Panc1 (cell line): ENCODE measurements at regions of chr1 and their contacts with region 1.

Region 1: GRCh38 chr1:23004112-23004511 is 11.5 kb downstream of the TEX46 start:
- DNase-seq: no peak
- ATAC-seq: no peak
- H3K4me3 ChIP-seq: no peak overlapping the region
- H3K27ac ChIP-seq: no peak overlapping the region
- H3K4me1 ChIP-seq: no peaks in the 10 kb centered on the region
- H3K27me3 ChIP-seq: no peaks in the 10 kb centered on the region
- CTCF ChIP-seq: no peak

Region 2: DNA sequence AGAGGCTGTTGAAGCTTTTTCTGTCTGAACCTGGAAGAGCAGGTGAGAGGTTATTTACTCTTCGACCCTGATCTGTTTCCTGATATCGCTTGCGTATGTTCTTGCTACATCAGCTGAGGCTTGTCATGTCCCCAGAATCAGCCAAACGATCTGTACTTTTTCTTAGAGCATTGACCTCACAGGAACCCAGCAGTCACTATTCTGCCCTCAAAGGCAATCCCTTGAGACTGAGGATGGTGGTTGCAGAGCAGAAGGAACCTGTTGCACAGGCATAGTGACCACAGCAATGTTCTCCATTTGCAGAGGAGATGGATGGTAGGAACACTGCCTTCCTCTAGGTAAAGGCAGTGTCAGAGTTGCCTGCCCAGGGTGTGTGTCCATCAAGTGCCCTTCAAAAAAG is 20.2 kb before region 1 on chr1:
- CTCF ChIA-PET with region 1: no interaction called
- POLR2A ChIA-PET with region 1: interaction called, 20 read pairs
- in situ Hi-C with region 1: no loop called
- intact Hi-C with region 1: no loop called
- DNase-seq: no peak
- ATAC-seq: no peak
- H3K4me3 ChIP-seq: no peak overlapping the region
- H3K27ac ChIP-seq: no peak overlapping the region
- H3K4me1 ChIP-seq: no peaks in the 10 kb centered on the region
- H3K27me3 ChIP-seq: no peaks in the 10 kb centered on the region
- CTCF ChIP-seq: no peak